AG04450 (cell line): ENCODE measurements at regions of chr12 and their contacts with region 1.

Region 1: GRCh38 chr12:102484428-102484958 is 4.1 kb upstream of the IGF1 start:
- DNase-seq: no peak
- H3K4me3 ChIP-seq: no peak overlapping the region
- H3K27ac ChIP-seq: no peak overlapping the region
- H3K27me3 ChIP-seq: no peaks in the 10 kb centered on the region
- CTCF ChIP-seq: peak; percentile 93

Region 2: DNA sequence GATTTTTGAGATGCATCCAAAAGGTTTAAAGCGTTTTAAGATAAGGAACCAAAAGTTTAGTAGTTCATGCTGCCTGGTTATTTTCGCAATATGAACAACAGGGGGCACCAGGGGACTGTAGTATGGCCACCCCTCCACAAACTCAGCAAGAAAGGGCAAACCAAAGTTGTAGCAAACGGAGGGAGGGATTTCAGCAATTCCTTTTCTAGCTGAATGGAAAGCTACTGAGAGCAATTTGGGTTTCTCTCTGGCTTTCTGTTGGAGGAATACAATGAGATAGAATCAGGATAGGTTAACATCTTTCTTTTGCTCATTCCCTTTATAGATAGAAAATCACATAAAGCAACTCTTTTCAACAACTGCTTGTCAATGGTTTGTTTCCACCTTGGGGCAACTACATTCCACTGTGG is 544.6 kb before region 1 on chr12:
- CTCF ChIA-PET with region 1: interaction called, 34 read pairs
- POLR2A ChIA-PET with region 1: no interaction called
- DNase-seq: peak; percentile 63
- H3K4me3 ChIP-seq: no peak overlapping the region
- H3K27ac ChIP-seq: no peak overlapping the region
- H3K27me3 ChIP-seq: no peaks in the 10 kb centered on the region
- CTCF ChIP-seq: peak; percentile 89

Region 3: GRCh38 chr12:102119674-102120563 is 364.6 kb before region 1 on chr12 and contains the starts of genes NUP37 and PARPBP:
- CTCF ChIA-PET with region 1: interaction called, 11 read pairs
- POLR2A ChIA-PET with region 1: no interaction called
- DNase-seq: peak; percentile 50
- H3K4me3 ChIP-seq: peak within 1 kb of the TSS; percentile 85
- H3K27ac ChIP-seq: peak within 1 kb of the TSS; percentile 79
- H3K27me3 ChIP-seq: no peaks in the 10 kb centered on the region
- CTCF ChIP-seq: no peak
- polyA plus RNA-seq, gene NUP37: 42.6 and 62.5 TPM in 2 replicates
- polyA plus RNA-seq, gene PARPBP: 4.2 and 6.0 TPM in 2 replicates

Region 4: GRCh38 chr12:102356690-102357089 is 127.8 kb before region 1 on chr12:
- CTCF ChIA-PET with region 1: no interaction called
- POLR2A ChIA-PET with region 1: no interaction called
- DNase-seq: no peak
- H3K4me3 ChIP-seq: no peak overlapping the region
- H3K27ac ChIP-seq: no peak overlapping the region
- H3K27me3 ChIP-seq: no peaks in the 10 kb centered on the region
- CTCF ChIP-seq: no peak

Region 5: GRCh38 chr12:102468261-102468915 is 16.1 kb before region 1 on chr12:
- CTCF ChIA-PET with region 1: interaction called, 66 read pairs
- POLR2A ChIA-PET with region 1: no interaction called
- DNase-seq: no peak
- H3K4me3 ChIP-seq: no peak overlapping the region
- H3K27ac ChIP-seq: no peak overlapping the region
- H3K27me3 ChIP-seq: no peaks in the 10 kb centered on the region
- CTCF ChIP-seq: no peak

Region 6: GRCh38 chr12:102571889-102572288 is 87.4 kb after region 1 on chr12:
- CTCF ChIA-PET with region 1: interaction called, 11 read pairs
- POLR2A ChIA-PET with region 1: no interaction called
- DNase-seq: no peak
- H3K4me3 ChIP-seq: no peak overlapping the region
- H3K27ac ChIP-seq: no peak overlapping the region
- H3K27me3 ChIP-seq: no peaks in the 10 kb centered on the region
- CTCF ChIP-seq: no peak